Calu3 (cell line): ENCODE measurements at regions of chr7 and their contacts with region 1.

Region 1: GRCh38 chr7:46282155-46282554 is 361.1 kb upstream of the IGFBP3 start:
- DNase-seq: peak; percentile 30
- H3K4me3 Mint-ChIP-seq: no peak overlapping the region
- H3K27ac Mint-ChIP-seq: no peak overlapping the region
- H3K4me1 Mint-ChIP-seq: peaks cover 47% of the 10 kb centered on the region
- H3K27me3 Mint-ChIP-seq: no peaks in the 10 kb centered on the region
- CTCF ChIP-seq: no peak

Region 2: GRCh38 chr7:46072683-46073082 is 209.5 kb before region 1 on chr7:
- CTCF ChIA-PET with region 1: no interaction called
- intact Hi-C with region 1: no loop called
- DNase-seq: no peak
- H3K4me3 Mint-ChIP-seq: no peak overlapping the region
- H3K27ac Mint-ChIP-seq: no peak overlapping the region
- H3K4me1 Mint-ChIP-seq: peaks cover 19% of the 10 kb centered on the region
- H3K27me3 Mint-ChIP-seq: no peaks in the 10 kb centered on the region
- CTCF ChIP-seq: no peak

Region 3: DNA sequence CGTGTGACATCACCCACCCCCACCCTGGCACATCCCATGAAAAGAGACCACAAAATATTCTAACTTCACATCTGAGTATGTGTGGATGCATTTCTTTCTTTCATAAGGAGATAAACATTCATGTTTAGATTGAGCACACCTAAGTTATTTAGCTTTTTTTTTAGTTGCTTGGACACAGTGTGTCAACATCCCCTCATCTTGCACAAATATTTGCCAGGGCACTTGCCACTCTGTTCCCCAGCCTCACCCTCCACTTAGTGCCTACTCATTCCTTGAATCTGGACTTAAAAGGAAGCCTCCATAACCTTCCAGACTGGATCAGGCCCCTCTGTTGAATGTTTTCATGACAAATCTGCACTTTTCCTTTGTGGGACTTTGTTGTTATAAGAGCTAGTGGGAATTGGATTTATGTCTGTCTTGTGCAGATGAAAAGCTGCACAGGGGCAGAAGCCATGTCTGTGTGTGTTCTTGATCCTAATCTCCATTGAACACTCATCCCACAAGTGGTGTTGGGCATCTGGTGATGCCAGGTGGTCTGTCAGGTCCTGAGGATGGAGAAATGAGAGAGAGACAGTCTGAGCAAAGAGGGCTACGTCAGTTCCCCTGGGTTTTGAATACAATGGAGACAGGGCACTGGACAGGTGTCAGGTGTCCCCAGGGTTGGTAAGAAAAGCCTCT is 22.1 kb before region 1 on chr7:
- CTCF ChIA-PET with region 1: interaction called, 10 read pairs
- intact Hi-C with region 1: no loop called
- DNase-seq: no peak
- H3K4me3 Mint-ChIP-seq: no peak overlapping the region
- H3K27ac Mint-ChIP-seq: peak overlapping the region; percentile 19
- H3K4me1 Mint-ChIP-seq: peaks cover 40% of the 10 kb centered on the region
- H3K27me3 Mint-ChIP-seq: no peaks in the 10 kb centered on the region
- CTCF ChIP-seq: no peak